Ascending aorta (tissue), 2 donors: ENCODE measurements at regions of chr18 and their contacts with region 1.

Region 1: GRCh38 chr18:62522504-62523254 is at the start of gene ZCCHC2:
- DNase-seq: peak; percentile 90 to 98
- H3K4me3 ChIP-seq: peak within 1 kb of the TSS; percentile 95 to 96
- H3K27ac ChIP-seq: peak within 1 kb of the TSS; percentile 96 to 99
- H3K4me1 ChIP-seq: peaks cover 5 to 18% of the 10 kb centered on the region in 2 donors
- H3K27me3 ChIP-seq: no peaks in the 10 kb centered on the region
- CTCF ChIP-seq: no peak
- total RNA-seq, gene ZCCHC2: 22.9 TPM

Region 2: DNA sequence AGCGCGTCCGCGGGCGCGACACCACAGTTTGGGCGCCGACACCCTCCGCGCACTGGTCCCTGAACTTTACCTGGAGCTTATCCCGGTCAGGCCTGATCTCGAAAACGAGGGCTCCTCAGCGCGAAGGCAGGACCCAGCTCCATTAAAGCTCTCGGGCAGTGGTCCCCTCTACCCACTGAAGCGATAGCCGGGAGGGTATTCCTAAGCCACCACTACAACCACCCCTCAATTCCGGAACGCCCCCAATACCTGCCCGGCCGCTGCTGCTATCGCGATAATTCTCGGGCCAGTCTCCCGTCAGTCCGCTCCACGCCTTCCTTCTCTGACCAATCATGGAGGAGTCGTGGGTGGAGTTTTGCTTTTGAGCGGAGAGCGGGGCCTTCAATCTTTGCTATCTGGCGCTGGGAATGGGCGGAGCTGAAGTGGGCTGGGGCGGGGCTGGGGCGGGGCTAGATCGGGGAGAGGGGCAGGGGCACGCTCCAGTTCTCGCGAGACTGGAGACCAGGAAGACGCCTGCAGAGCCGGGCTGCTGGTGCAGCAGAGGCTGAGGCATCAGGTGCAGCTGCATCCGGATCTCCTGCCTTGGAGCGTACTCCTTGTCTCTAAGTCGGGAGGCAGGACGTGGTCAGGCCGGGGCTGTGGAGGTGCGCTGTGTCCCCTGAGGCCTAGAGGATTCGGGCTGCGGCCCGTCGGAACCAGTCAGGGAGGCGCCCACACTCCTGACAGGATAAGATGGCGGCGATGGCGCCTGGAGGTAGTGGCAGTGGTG is 335.7 kb before region 1 on chr18 and contains the starts of genes PIGN and RELCH:
- intact Hi-C with region 1: loop called (anchors 2 kb)
- DNase-seq: peak; percentile 96 to 99
- H3K4me3 ChIP-seq: peak within 1 kb of the TSS; percentile 79 to 98
- H3K27ac ChIP-seq: peak within 1 kb of the TSS; percentile 75 to 82
- H3K4me1 ChIP-seq: peaks cover 0 to 28% of the 10 kb centered on the region in 2 donors
- H3K27me3 ChIP-seq: no peaks in the 10 kb centered on the region
- CTCF ChIP-seq: no peak
- total RNA-seq, gene PIGN: 12.8 TPM
- total RNA-seq, gene RELCH: 26.4 TPM

Region 3: DNA sequence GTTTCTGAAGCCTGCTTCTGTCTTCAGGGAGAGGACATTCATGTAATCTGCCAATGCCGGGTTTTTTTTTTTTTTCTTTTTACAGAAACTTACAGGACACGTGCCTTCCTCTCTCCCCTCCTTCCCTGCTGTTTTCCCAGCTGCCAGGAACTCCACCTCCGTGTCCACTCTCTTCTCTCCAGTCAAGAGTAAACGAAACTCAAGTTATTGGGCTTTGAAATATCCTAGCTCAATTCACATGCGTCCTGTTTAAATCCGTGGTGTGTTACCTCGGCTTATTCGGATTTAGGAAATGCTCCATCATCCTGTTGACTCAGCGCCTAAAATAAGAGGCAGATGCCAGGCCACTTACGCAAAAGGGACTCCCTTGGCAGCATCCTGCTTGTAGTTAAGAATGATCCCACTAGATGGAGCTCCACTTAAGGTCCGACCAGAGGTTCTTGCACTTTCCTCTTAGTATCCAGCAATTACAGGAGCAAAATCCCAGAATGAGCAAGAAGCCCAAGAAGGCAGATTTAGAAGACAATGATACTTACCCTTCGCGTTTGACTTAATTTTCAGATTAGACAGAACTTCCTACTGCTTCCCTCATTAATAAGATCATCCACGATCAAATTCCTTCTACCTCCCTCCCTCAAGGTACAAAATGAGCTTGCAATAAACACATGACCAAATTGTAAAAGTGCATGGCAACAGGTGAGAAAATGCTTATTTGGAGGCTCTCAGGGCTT is 97.0 kb before region 1 on chr18:
- intact Hi-C with region 1: loop called (anchors 1 kb)
- DNase-seq: peak; percentile 60 to 96
- H3K4me3 ChIP-seq: peak overlapping the region; percentile 36 to 57
- H3K27ac ChIP-seq: peak overlapping the region; percentile 82 to 92
- H3K4me1 ChIP-seq: peaks cover 0 to 12% of the 10 kb centered on the region in 2 donors
- H3K27me3 ChIP-seq: no peaks in the 10 kb centered on the region
- CTCF ChIP-seq: peak; percentile 81 to 87 (median 82)

Region 4: DNA sequence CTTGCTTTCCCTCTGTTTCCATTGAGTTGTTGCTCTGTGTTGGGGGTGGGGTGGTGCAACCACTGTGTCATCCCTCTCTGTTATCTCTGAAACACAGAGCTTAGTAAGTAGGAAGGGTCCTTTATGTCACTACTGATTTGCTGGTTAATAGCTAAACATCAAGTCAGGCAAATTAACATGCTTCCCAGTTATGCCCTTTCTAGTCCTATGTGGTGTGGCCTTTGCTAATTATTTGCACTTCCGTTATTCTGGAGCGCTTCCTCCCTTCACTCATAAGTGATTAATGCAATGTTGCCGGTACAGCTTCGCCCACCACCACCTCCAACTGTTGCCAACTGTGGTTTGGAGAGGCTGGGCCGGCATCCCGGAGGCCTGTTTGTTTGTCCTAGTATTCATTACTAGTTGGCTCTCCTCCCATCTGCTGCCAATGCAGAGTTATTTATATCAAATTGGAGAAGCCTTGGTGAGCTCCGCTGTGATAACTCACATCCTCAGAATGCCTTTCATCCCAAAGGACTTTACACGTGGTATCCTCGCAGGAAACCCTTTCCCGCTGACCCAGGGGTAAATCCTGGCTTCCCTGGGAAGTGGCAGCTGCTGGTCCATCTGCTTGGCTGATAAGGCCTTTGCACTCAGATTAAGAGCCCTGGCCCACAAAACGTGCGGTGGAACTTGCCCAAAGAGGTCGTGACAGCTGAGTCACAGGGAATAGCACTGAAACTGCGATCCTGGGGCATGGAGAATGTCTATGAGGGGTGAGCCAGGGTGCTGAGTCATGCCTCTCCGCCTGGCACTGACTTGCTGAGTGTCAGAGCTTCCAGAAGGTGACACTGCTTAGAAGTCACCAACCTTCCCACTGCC is 71.9 kb before region 1 on chr18:
- intact Hi-C with region 1: loop called (anchors 1 kb)
- DNase-seq: peak; percentile 74 to 92
- H3K4me3 ChIP-seq: peak overlapping the region in 1 of 2 donors; percentile 1
- H3K27ac ChIP-seq: peak overlapping the region; percentile 28 to 62
- H3K4me1 ChIP-seq: peaks cover 0 to 10% of the 10 kb centered on the region in 2 donors
- H3K27me3 ChIP-seq: no peaks in the 10 kb centered on the region
- CTCF ChIP-seq: no peak

Region 5: DNA sequence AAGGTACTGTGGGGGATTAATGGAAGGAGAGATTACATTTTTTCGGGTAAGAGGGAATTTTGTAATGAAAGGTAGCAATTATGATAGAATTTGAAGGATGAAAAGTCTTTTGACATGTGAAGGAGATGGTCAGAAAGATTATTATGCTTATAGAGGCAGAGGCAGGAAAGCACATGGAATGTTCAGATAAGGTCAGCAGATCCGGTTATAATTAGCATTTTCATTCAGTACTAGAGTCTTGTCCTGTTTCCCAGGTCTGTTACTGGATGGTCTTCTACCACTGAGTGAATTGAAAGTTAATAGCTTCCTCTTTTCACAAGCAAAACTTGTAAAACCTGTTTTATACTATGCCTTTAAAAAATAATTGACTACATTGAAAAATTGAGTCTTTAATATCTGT is 309.6 kb after region 1 on chr18:
- intact Hi-C with region 1: no loop called
- DNase-seq: no peak
- H3K4me3 ChIP-seq: no peak overlapping the region
- H3K27ac ChIP-seq: no peak overlapping the region
- H3K4me1 ChIP-seq: peaks cover 0 to 5% of the 10 kb centered on the region in 2 donors
- H3K27me3 ChIP-seq: no peaks in the 10 kb centered on the region
- CTCF ChIP-seq: no peak

Region 6: GRCh38 chr18:63367053-63367953 is 844.6 kb after region 1 on chr18 and contains the start of gene KDSR:
- intact Hi-C with region 1: loop called (anchors 2 kb)
- DNase-seq: peak; percentile 85 to 98
- H3K4me3 ChIP-seq: peak within 1 kb of the TSS; percentile 87 to 92
- H3K27ac ChIP-seq: peak within 1 kb of the TSS; percentile 98
- H3K4me1 ChIP-seq: peaks cover 2 to 19% of the 10 kb centered on the region in 2 donors
- H3K27me3 ChIP-seq: no peaks in the 10 kb centered on the region
- CTCF ChIP-seq: no peak
- total RNA-seq, gene KDSR: 208 TPM

Region 7: GRCh38 chr18:63969960-63970802 is 1447.5 kb after region 1 on chr18 and contains the start of gene SERPINB8:
- intact Hi-C with region 1: loop called (anchors 10 kb)
- DNase-seq: peak; percentile 76 to 98
- H3K4me3 ChIP-seq: peak within 1 kb of the TSS; percentile 77 to 80
- H3K27ac ChIP-seq: peak within 1 kb of the TSS; percentile 97 to 99
- H3K4me1 ChIP-seq: peaks cover 0 to 4% of the 10 kb centered on the region in 2 donors
- H3K27me3 ChIP-seq: no peaks in the 10 kb centered on the region
- CTCF ChIP-seq: no peak
- total RNA-seq, gene SERPINB8: 4.5 TPM